ENCODE measurements at regions of chr19 and their contacts with region 1.

Region 1: DNA sequence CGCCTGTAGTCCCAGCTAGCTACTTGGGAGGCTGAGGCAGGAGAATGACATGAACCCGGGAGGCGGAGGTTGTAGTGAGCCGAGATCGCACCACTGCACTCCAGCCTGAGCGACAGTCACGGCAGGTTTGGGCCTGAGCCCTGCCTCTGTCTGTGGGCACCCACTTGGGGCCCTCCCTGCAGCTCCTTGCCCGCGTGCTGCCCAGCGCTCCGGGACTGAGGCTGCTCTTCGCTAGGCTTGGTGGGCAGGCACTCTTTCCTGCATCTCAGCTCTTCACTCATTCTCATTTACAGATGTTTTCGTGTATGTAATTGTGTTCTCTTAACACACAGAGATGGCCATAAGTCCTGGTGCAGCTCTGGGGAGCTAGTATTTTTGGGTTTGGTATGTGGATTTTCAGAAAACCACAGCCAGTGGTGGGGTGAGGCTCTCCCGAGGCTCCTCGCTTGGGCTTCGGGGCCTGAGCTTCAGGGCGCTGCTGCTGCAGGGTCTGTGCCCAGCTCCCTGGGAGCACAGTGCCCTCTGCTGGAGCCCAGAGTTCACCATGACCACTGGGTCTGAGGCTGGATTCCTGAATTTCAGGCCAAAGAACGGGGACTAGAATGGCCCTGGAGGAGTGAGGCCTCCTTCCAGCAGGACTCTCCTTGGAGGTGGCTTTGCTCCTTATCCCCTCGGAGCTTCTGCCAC is 15.2 kb downstream of the UPF1 start:
- DNase-seq: peak in 1 of 2 experiments; percentile 74
- H3K4me3 ChIP-seq: no peak overlapping the region
- H3K4me3 Mint-ChIP-seq: no peak overlapping the region
- H3K27ac Mint-ChIP-seq: peak overlapping the region; percentile 61
- H3K4me1 ChIP-seq: no peaks in the 10 kb centered on the region
- H3K4me1 Mint-ChIP-seq: peaks cover 4% of the 10 kb centered on the region
- H3K27me3 ChIP-seq: no peaks in the 10 kb centered on the region
- H3K27me3 Mint-ChIP-seq: no peaks in the 10 kb centered on the region
- CTCF ChIP-seq: peak; percentile 71 to 86

Region 2: GRCh38 chr19:18771328-18772242 is 75.4 kb before region 1 on chr19:
- CTCF ChIA-PET with region 1: interaction called, 14 read pairs
- POLR2A ChIA-PET with region 1: no interaction called
- intact Hi-C with region 1: loop called (anchors 1 kb)
- DNase-seq: peak; percentile 65 to 69
- H3K4me3 ChIP-seq: no peak overlapping the region
- H3K4me3 Mint-ChIP-seq: no peak overlapping the region
- H3K27ac Mint-ChIP-seq: no peak overlapping the region
- H3K4me1 ChIP-seq: no peaks in the 10 kb centered on the region
- H3K4me1 Mint-ChIP-seq: no peaks in the 10 kb centered on the region
- H3K27me3 ChIP-seq: no peaks in the 10 kb centered on the region
- H3K27me3 Mint-ChIP-seq: no peaks in the 10 kb centered on the region
- CTCF ChIP-seq: peak; percentile 46 to 67

Region 3: GRCh38 chr19:18780631-18781030 is 66.4 kb before region 1 on chr19:
- CTCF ChIA-PET with region 1: interaction called, 12 read pairs
- POLR2A ChIA-PET with region 1: no interaction called
- intact Hi-C with region 1: no loop called
- DNase-seq: no peak
- H3K4me3 ChIP-seq: no peak overlapping the region
- H3K4me3 Mint-ChIP-seq: no peak overlapping the region
- H3K27ac Mint-ChIP-seq: no peak overlapping the region
- H3K4me1 ChIP-seq: no peaks in the 10 kb centered on the region
- H3K4me1 Mint-ChIP-seq: peaks cover 5% of the 10 kb centered on the region
- H3K27me3 ChIP-seq: no peaks in the 10 kb centered on the region; the same call in 1 of the 2 replicates
- H3K27me3 Mint-ChIP-seq: no peaks in the 10 kb centered on the region
- CTCF ChIP-seq: peak in 1 of 2 experiments; percentile 32

Measured in Caco-2 (cell line).